Calu3 (cell line): ENCODE measurements at regions of chr10 and their contacts with region 1.

Region 1: DNA sequence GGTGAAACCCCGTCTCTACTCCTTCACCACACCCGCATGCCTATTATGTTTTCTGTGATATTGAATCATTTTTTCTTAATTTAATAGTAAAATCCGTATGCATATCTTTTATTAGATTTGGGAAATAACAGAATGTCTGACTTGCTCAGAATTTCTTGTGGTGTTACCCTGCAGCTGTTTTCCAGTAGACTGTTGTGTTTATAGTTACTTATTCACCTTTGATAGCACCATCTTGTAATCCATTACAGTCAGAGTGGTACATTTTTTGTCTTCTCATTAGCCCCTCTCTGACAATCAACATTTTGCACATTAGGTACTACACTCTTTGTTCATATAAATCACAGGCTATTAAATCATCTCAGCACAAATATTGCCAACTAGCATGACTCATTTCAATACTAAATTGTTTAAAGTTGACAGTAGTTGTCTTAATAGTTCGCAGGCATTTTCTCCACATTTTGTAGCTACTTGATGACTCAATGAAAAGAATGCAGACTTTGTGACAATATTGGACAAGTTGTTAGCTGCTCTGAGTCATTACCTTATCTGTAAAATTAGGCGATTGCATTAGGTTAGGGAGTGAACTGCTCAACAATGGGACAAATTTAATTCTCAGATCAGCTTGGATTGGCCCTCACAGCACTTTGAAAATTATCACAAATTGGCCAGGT is 17.8 kb upstream of the SLC16A12 start:
- DNase-seq: peak; percentile 44
- H3K4me3 Mint-ChIP-seq: no peak overlapping the region
- H3K27ac Mint-ChIP-seq: peak overlapping the region; percentile 61
- H3K4me1 Mint-ChIP-seq: peaks cover 59% of the 10 kb centered on the region
- H3K27me3 Mint-ChIP-seq: no peaks in the 10 kb centered on the region
- CTCF ChIP-seq: no peak

Region 2: GRCh38 chr10:88401671-88402347 is 1151.4 kb before region 1 on chr10:
- CTCF ChIA-PET with region 1: no interaction called
- intact Hi-C with region 1: no loop called
- DNase-seq: no peak
- H3K4me3 Mint-ChIP-seq: no peak overlapping the region
- H3K27ac Mint-ChIP-seq: no peak overlapping the region
- H3K4me1 Mint-ChIP-seq: peaks cover 18% of the 10 kb centered on the region
- H3K27me3 Mint-ChIP-seq: no peaks in the 10 kb centered on the region
- CTCF ChIP-seq: no peak

Region 3: DNA sequence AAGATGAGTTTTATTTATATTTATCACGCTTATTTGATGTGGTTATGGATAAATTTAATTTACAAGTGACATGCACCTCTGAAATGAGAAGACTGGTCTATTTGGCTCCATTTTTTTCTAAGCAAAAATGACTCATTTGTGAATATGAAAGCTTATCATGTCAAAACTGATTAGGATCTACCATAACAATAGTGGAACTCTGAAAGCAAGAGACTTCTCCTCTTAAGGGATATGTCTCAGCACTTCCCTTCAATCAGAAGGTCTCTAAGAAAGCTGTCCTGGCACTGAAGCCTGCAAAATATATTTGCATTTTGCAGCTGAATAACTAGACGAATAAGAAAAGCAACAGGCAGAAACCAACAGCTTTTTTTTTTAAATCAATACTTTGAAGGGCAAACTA is 549.9 kb before region 1 on chr10:
- CTCF ChIA-PET with region 1: no interaction called
- intact Hi-C with region 1: no loop called
- DNase-seq: no peak
- H3K4me3 Mint-ChIP-seq: no peak overlapping the region
- H3K27ac Mint-ChIP-seq: no peak overlapping the region
- H3K4me1 Mint-ChIP-seq: no peaks in the 10 kb centered on the region
- H3K27me3 Mint-ChIP-seq: no peaks in the 10 kb centered on the region
- CTCF ChIP-seq: no peak

Region 4: GRCh38 chr10:89251409-89252224 is 301.6 kb before region 1 on chr10 and contains the start of gene LIPA:
- CTCF ChIA-PET with region 1: no interaction called
- intact Hi-C with region 1: loop called (anchors 10 kb)
- DNase-seq: peak; percentile 92
- H3K4me3 Mint-ChIP-seq: peak within 1 kb of the TSS; percentile 77
- H3K27ac Mint-ChIP-seq: no peak within 1 kb of the TSS
- H3K4me1 Mint-ChIP-seq: peaks cover 7% of the 10 kb centered on the region
- H3K27me3 Mint-ChIP-seq: no peaks in the 10 kb centered on the region
- CTCF ChIP-seq: no peak
- total RNA-seq, gene LIPA: 66.7 and 127 TPM in 2 replicates

Region 5: DNA sequence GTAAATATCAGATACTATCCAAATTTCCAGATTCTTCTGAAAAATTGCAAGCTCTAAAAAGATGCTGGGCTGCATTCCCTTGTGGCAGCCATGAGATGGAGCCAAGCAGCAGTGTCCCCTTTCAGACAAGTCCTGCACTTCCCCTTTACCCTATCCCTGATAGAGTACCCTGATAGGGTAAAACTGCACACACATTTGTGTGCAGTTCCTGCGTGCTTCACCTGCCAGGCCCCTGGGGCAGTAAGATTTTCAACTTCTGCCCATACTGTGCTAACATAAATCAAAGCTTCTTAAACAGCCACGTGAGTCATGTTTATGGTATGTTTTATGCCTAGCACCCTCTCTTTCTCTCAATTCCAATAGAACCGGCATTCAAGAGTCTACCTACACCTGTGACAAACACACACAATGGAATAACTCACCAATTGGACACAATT is 86.6 kb before region 1 on chr10:
- CTCF ChIA-PET with region 1: interaction called, 10 read pairs
- intact Hi-C with region 1: loop called (anchors 2 kb)
- DNase-seq: peak; percentile 51
- H3K4me3 Mint-ChIP-seq: no peak overlapping the region
- H3K27ac Mint-ChIP-seq: peak overlapping the region; percentile 54
- H3K4me1 Mint-ChIP-seq: peaks cover 48% of the 10 kb centered on the region
- H3K27me3 Mint-ChIP-seq: no peaks in the 10 kb centered on the region
- CTCF ChIP-seq: no peak